ENCODE measurements at regions of chr17 and their contacts with region 1.

Region 1: DNA sequence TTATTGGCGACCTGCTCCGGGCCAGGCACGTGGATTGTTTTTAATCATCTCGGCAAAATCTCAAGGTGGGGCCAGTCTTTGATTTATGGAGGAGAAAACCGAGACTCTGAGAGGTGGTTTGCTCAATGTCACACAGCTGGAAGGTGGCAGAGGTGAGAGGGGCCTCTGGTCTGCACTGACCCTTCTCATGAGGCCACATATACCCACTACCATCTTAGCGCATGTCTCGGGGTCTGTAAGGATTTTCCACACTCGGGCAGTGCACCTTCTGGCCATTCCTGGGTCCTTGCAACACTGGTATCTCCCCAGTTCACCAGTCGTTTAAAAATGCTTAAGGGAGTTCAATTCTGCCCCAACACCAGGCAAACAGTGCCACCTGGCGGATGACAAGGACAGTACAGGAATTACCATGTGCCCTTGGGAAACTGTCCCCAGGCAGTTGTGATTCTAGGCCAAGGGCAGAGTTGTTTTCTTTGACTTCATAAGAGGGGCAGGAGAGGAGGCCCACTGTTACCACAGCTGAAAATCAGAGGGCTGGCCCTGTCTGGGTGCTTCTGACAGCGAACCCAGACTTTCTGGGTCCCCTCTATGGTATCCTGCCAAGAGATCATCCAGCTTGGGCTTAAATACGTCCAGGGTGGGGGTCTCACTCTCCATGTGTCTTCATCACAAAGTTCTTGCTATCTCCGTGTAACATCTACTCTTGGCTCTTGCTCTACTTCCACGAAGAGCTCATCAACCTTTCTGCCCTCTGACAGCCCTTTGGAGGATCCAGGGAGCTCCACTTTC is 39.4 kb upstream of the RAI1 start:
- DNase-seq: peak; percentile 56
- H3K27ac ChIP-seq: no peak overlapping the region
- CTCF ChIP-seq: peak; percentile 84

Region 2: DNA sequence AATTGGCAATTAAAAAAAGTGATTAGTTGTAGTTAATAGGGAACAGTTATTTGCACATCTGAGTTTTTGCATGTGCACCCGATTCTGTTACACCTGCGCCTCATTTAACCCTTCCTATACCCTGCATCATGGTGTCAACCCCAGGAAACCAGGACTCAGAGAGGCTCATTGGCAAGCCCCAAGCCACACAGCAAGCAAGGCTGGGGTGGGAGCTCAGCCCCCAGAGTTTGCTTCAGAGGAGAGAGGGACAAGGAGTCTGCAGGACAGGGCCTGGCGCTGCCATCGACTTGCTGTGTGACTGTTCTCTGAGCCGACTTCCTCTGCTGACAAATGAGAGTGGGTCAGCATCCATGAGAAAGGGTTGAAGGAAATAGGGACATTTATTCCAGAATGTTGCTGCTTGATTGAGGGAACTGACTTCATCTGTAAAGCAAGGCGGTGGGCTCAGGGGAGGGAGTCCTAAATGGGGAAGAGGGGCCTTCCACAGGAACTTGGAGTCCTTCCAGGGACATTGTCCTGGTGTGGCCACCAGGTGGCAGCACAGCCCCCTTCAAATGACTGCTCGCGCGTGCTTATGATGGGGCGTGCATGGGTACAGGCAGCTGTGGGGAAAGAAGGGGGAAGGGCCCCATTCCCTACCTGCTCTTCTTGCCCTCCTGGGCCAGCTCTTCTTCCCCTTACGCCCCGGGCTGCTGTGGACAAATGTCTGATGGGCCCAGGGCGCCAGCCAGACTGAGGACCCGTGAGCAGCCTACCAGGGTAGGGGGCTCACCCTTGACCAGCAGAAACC is 287.1 kb before region 1 on chr17:
- CTCF ChIA-PET with region 1: interaction called, 23 read pairs
- POLR2A ChIA-PET with region 1: no interaction called
- DNase-seq: peak; percentile 74
- H3K27ac ChIP-seq: no peak overlapping the region
- CTCF ChIP-seq: peak; percentile 85

Region 3: DNA sequence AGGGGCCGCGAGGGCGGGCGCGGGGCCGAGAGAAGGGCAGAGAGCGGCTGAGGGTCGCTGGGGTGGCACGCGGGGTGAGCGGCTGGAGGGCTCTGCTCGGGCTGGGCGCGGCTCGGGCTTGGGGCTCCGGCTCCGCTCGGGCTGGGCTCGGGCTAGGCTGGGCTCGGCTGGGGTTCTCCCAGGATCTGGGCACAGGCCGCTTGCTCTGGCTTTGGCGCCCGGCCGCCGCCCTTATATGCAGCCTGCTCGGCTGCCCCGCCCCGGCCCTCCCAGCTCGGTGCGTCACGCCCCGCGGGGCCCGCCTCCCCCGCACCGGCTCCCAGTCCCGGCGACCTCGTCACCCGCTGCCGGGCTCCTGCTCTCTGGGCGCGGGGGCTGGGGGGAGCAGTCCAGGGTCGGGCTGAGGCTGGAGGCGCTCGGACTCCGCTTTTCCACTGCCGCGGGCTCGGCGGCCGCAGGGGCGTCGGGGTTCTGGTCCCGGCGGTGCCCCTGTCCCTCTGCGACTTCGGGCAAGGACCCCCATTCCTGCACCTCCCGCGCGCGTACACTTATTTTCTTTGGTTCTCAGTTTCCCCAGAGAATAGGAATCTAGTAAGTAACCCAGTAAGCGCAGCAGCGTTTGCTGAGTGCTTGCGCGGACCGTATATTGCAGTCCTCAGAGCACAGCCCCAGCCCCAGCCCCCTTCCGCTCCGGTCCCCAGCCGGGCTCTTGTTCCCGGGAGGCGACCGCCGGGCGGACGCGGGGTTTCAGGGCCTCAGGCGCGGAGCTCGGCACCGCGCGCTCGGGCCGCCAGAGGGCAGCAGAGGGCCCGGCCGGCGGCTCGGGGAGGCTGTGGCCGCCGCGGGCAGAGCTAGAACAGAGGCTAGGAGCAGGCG is 145.4 kb before region 1 on chr17 and contains the start of gene RASD1:
- CTCF ChIA-PET with region 1: interaction called, 16 read pairs
- POLR2A ChIA-PET with region 1: no interaction called
- DNase-seq: peak; percentile 92
- H3K27ac ChIP-seq: peak within 1 kb of the TSS; percentile 38
- CTCF ChIP-seq: peak; percentile 97

Measured in RWPE1 (cell line).